ENCODE measurements at regions of chr3 and their contacts with region 1.

Region 1: DNA sequence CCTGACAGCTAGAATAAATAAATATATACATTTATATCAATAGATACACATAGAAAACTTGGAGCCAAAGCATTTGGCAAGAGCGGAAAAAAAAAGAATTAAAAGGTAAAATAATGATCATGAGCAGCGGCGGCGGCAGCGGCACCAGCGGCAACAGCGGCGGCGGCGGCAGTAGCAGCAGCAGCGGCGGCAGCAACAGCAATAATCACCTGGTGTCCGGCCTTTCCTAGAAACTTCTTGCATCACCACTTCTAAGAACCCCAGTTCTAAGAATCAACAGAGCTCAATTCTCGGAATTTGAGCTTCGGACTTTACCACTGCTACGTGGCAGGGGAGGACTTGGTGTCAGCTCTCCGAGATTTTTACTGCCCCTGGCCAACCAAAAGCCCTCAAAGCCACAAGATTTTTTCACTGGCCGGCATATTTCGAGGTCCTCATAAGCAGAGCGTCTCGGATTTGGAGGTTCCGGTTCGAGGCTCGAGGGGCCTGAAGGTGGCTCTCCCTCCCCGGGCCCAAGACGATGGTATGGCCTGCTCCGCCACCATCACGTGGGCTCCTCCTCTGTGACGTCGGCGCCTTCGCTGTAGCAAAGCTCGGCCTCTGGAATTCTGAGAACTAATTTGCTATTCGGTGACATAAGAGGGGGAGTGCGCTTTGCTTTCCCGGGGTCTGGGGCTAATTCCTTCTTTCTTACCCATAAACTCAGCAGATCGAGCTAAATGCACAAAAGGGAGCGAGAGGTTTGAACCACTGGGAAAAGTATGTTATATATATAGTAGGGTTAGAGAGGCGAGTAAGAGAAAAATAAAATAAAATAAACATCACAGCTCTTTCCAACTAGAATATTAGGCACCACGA is at the start of gene BCL6:
- DNase-seq: peak; percentile 66 to 96 (median 82)
- ATAC-seq: peak; percentile 64
- H3K4me3 ChIP-seq: peak within 1 kb of the TSS; percentile 96
- H3K4me3 Mint-ChIP-seq: peak within 1 kb of the TSS; percentile 100
- H3K27ac ChIP-seq: peak within 1 kb of the TSS; percentile 95 to 99
- H3K27ac Mint-ChIP-seq: peak within 1 kb of the TSS; percentile 99
- H3K4me1 ChIP-seq: peaks cover 49% of the 10 kb centered on the region
- H3K4me1 Mint-ChIP-seq: peaks cover 85% of the 10 kb centered on the region
- H3K27me3 ChIP-seq: no peaks in the 10 kb centered on the region
- H3K27me3 Mint-ChIP-seq: no peaks in the 10 kb centered on the region
- CTCF ChIP-seq: no peak
- total RNA-seq, gene BCL6: 76.6 to 79.6 TPM

Region 2: GRCh38 chr3:187919048-187919447 is 173.6 kb after region 1 on chr3:
- CTCF ChIA-PET with region 1: interaction called, 5 read pairs
- POLR2A ChIA-PET with region 1: no interaction called
- intact Hi-C with region 1: loop called (anchors 2 to 5 kb)
- DNase-seq: peak; percentile 20 to 84 (median 45)
- ATAC-seq: peak; percentile 87
- H3K4me3 ChIP-seq: peak overlapping the region; percentile 30
- H3K4me3 Mint-ChIP-seq: peak overlapping the region; percentile 82
- H3K27ac ChIP-seq: peak overlapping the region; percentile 8 to 53
- H3K27ac Mint-ChIP-seq: peak overlapping the region; percentile 85
- H3K4me1 ChIP-seq: peaks cover 22% of the 10 kb centered on the region
- H3K4me1 Mint-ChIP-seq: peaks cover 56% of the 10 kb centered on the region
- H3K27me3 ChIP-seq: no peaks in the 10 kb centered on the region
- H3K27me3 Mint-ChIP-seq: no peaks in the 10 kb centered on the region
- CTCF ChIP-seq: no peak

Region 3: GRCh38 chr3:187974871-187975271 is 229.4 kb after region 1 on chr3:
- CTCF ChIA-PET with region 1: interaction called, 13 read pairs
- POLR2A ChIA-PET with region 1: interaction called, 17 read pairs
- intact Hi-C with region 1: loop called in 1 of 2 experiments (anchors 2 kb)
- DNase-seq: peak in 3 of 14 experiments; percentile 68 to 78 (median 73)
- ATAC-seq: peak; percentile 64
- H3K4me3 ChIP-seq: peak overlapping the region; percentile 24
- H3K4me3 Mint-ChIP-seq: peak overlapping the region; percentile 43
- H3K27ac ChIP-seq: peak overlapping the region; percentile 39 to 65
- H3K27ac Mint-ChIP-seq: peak overlapping the region; percentile 84
- H3K4me1 ChIP-seq: peaks cover 50% of the 10 kb centered on the region
- H3K4me1 Mint-ChIP-seq: peaks cover 54% of the 10 kb centered on the region
- H3K27me3 ChIP-seq: no peaks in the 10 kb centered on the region
- H3K27me3 Mint-ChIP-seq: no peaks in the 10 kb centered on the region
- CTCF ChIP-seq: peak; percentile 56

Region 4: DNA sequence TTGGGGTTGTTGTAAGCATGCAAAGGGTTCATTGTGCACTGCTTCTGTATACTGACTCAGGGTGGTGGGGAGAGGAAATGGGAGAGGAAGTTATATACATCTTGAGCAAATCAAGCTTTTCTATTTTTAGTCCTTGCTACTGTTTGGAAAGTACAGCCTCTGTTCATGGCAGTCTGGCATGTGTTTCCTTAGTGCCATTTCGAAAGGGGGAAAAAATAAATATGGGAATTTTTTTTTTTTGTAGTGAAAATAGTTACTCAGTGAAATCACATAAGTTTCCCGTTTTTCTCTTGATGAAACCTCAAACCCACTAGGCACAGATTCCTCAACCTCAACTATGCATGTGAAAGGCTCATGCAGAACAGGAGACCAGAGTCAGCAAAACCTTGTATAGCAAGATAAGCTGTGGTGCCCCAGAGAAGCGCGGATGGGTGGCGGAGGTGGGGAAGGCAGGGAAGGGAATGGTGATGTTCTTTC is 761.9 kb after region 1 on chr3:
- CTCF ChIA-PET with region 1: no interaction called
- POLR2A ChIA-PET with region 1: no interaction called
- intact Hi-C with region 1: loop called in 1 of 2 experiments (anchors 10 kb)
- DNase-seq: peak in 2 of 14 experiments; percentile 42 to 55
- ATAC-seq: no peak
- H3K4me3 ChIP-seq: no peak overlapping the region
- H3K4me3 Mint-ChIP-seq: no peak overlapping the region
- H3K27ac ChIP-seq: no peak overlapping the region
- H3K27ac Mint-ChIP-seq: no peak overlapping the region
- H3K4me1 ChIP-seq: peaks cover 8% of the 10 kb centered on the region
- H3K4me1 Mint-ChIP-seq: peaks cover 22% of the 10 kb centered on the region
- H3K27me3 ChIP-seq: no peaks in the 10 kb centered on the region
- H3K27me3 Mint-ChIP-seq: no peaks in the 10 kb centered on the region
- CTCF ChIP-seq: no peak

Region 5: GRCh38 chr3:189132231-189132707 is 1386.8 kb after region 1 on chr3:
- CTCF ChIA-PET with region 1: interaction called, 5 read pairs
- POLR2A ChIA-PET with region 1: interaction called, 17 read pairs
- intact Hi-C with region 1: no loop called
- DNase-seq: peak; percentile 36 to 93 (median 72)
- ATAC-seq: peak; percentile 96
- H3K4me3 ChIP-seq: peak overlapping the region; percentile 10
- H3K4me3 Mint-ChIP-seq: peak overlapping the region; percentile 56
- H3K27ac ChIP-seq: peak overlapping the region; percentile 30 to 74
- H3K27ac Mint-ChIP-seq: peak overlapping the region; percentile 97
- H3K4me1 ChIP-seq: peaks cover 27% of the 10 kb centered on the region
- H3K4me1 Mint-ChIP-seq: peaks cover 23% of the 10 kb centered on the region
- H3K27me3 ChIP-seq: no peaks in the 10 kb centered on the region
- H3K27me3 Mint-ChIP-seq: no peaks in the 10 kb centered on the region
- CTCF ChIP-seq: no peak

Region 6: GRCh38 chr3:189233225-189233858 is 1487.9 kb after region 1 on chr3:
- CTCF ChIA-PET with region 1: no interaction called
- POLR2A ChIA-PET with region 1: no interaction called
- intact Hi-C with region 1: no loop called
- DNase-seq: peak in 4 of 14 experiments; percentile 9 to 21 (median 16)
- ATAC-seq: no peak
- H3K4me3 ChIP-seq: no peak overlapping the region
- H3K4me3 Mint-ChIP-seq: no peak overlapping the region
- H3K27ac ChIP-seq: no peak overlapping the region
- H3K27ac Mint-ChIP-seq: no peak overlapping the region
- H3K4me1 ChIP-seq: no peaks in the 10 kb centered on the region
- H3K4me1 Mint-ChIP-seq: no peaks in the 10 kb centered on the region
- H3K27me3 ChIP-seq: no peaks in the 10 kb centered on the region
- H3K27me3 Mint-ChIP-seq: no peaks in the 10 kb centered on the region
- CTCF ChIP-seq: peak; percentile 34

Measured in CD4-positive, alpha-beta T cell (primary cell).